Activated CD4-positive, alpha-beta T cell treated with anti-CD3 and anti-CD28 coated beads, Interleukin-2, amount 10 ng/mL, durations not matched to agents 7 days and 5 days (primary cell): ENCODE measurements at regions of chr6 and their contacts with region 1.

Region 1: GRCh38 chr6:35552285-35552917 is 39.7 kb upstream of the TULP1 start:
- DNase-seq: peak; percentile 75
- H3K4me3 Mint-ChIP-seq: no peak overlapping the region
- H3K27ac Mint-ChIP-seq: no peak overlapping the region
- H3K4me1 Mint-ChIP-seq: peaks cover 7% of the 10 kb centered on the region
- H3K27me3 Mint-ChIP-seq: peaks cover 12% of the 10 kb centered on the region

Region 2: GRCh38 chr6:35461244-35461643 is 91.2 kb before region 1 on chr6:
- CTCF ChIA-PET with region 1: no interaction called
- POLR2A ChIA-PET with region 1: no interaction called
- DNase-seq: no peak
- H3K4me3 Mint-ChIP-seq: no peak overlapping the region
- H3K27ac Mint-ChIP-seq: no peak overlapping the region
- H3K4me1 Mint-ChIP-seq: no peaks in the 10 kb centered on the region
- H3K27me3 Mint-ChIP-seq: no peaks in the 10 kb centered on the region

Region 3: GRCh38 chr6:35541836-35542235 is 10.6 kb before region 1 on chr6:
- CTCF ChIA-PET with region 1: interaction called, 15 read pairs
- POLR2A ChIA-PET with region 1: no interaction called
- DNase-seq: no peak
- H3K4me3 Mint-ChIP-seq: no peak overlapping the region
- H3K27ac Mint-ChIP-seq: no peak overlapping the region
- H3K4me1 Mint-ChIP-seq: peaks cover 4% of the 10 kb centered on the region
- H3K27me3 Mint-ChIP-seq: no peaks in the 10 kb centered on the region

Region 4: DNA sequence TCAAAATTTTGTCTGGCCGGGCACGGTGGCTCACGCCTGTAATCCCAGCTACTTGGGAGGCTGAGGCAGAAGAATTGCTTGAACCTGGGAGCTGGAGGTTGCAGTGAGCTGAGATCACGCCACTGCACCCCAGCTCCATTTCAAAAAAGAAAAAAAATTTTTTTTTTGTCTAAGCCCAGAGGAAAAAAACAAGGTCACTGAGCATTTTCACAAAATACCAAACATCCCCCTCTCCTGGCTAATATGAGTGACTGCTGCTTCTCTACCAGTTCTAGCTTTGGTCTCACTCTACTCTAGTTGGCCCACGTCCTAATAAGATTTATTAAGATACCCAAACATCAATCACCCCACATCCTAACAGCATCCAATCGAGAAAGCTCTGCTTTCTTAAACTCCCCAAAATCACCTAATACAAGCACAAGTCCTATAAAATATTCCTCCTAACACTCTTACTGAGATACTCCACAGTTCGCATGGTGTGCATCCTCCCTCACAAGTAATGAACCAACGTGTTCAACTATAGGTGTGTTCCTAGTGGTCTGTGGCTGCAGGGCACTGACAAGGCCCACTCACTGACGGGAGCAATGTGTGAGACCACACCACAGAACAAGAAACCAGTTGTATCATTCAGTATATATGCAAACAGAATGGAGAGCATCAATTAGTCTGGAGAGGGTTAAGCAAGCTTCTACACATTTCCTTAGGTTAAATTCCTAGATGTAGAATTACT is 72.1 kb after region 1 on chr6:
- CTCF ChIA-PET with region 1: no interaction called
- POLR2A ChIA-PET with region 1: no interaction called
- DNase-seq: no peak
- H3K4me3 Mint-ChIP-seq: no peak overlapping the region
- H3K27ac Mint-ChIP-seq: peak overlapping the region; percentile 81
- H3K4me1 Mint-ChIP-seq: peaks cover 21% of the 10 kb centered on the region
- H3K27me3 Mint-ChIP-seq: no peaks in the 10 kb centered on the region

Region 5: DNA sequence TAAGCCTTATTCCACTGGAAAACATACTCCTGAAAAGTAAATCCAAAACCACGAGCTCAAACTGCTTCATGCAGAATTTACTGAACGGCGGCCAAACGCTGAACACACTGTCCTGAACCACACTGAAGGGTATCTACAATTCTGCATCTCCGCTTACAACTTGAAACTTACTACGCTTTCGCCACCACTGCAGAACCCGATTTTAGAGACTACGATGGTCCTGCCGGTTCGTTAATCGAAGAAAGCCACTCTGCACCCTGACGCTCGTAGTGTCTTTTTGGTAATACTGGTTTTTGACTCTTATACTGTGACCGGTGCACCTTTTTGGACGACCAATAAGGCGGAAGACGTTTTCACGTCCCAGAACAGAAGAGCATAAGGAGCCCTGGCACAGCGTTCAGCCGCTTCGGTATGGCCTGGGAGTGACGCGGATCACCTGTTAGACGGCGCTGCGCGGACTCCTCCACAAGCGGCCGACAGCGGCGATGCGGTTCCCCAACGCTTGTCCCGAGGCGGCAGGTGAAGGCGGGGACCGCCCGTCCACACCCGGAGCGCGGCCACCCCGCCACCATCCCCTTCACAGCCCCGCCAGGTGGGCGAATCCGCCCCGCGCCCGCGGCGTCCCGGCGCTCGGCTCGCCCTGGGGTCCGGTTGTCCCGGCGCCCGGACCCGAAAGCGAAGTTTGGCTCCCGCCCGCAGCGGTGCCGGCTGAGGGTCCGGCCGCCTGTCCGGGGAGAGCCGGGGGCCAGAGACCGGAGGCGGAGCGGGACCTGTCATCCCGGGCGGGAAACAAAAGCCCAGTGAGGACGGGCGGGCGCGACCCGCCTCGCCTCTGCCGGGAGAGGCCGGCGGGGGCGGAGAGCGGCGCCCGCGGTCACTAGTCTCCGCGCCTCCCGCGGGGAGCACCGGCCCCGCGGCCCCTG is 135.5 kb after region 1 on chr6:
- CTCF ChIA-PET with region 1: no interaction called
- POLR2A ChIA-PET with region 1: no interaction called
- DNase-seq: peak; percentile 61
- H3K4me3 Mint-ChIP-seq: peak overlapping the region; percentile 98
- H3K27ac Mint-ChIP-seq: peak overlapping the region; percentile 95
- H3K4me1 Mint-ChIP-seq: peaks cover 15% of the 10 kb centered on the region
- H3K27me3 Mint-ChIP-seq: no peaks in the 10 kb centered on the region

Region 6: GRCh38 chr6:35706468-35706867 is 154.1 kb after region 1 on chr6:
- CTCF ChIA-PET with region 1: no interaction called
- POLR2A ChIA-PET with region 1: no interaction called
- DNase-seq: no peak
- H3K4me3 Mint-ChIP-seq: no peak overlapping the region
- H3K27ac Mint-ChIP-seq: no peak overlapping the region
- H3K4me1 Mint-ChIP-seq: peaks cover 23% of the 10 kb centered on the region
- H3K27me3 Mint-ChIP-seq: no peaks in the 10 kb centered on the region